Sigmoid colon (tissue), 7 donors: ENCODE measurements at regions of chr3 and their contacts with region 1.

Region 1: GRCh38 chr3:12982619-12983101 is 90.6 kb downstream of the IQSEC1 start:
- DNase-seq: no peak
- H3K4me3 ChIP-seq: no peak overlapping the region
- H3K27ac ChIP-seq: no peak overlapping the region
- H3K4me1 ChIP-seq: peaks cover 0 to 5% (median 0%) of the 10 kb centered on the region in 4 donors
- H3K27me3 ChIP-seq: no peaks in the 10 kb centered on the region
- CTCF ChIP-seq: no peak
- EP300 ChIP-seq: no peak
- POLR2A ChIP-seq: no peak

Region 2: GRCh38 chr3:12967606-12968351 is 14.9 kb before region 1 on chr3:
- intact Hi-C with region 1: loop called (anchors 2 kb)
- DNase-seq: peak; percentile 96
- H3K4me3 ChIP-seq: peak overlapping the region; percentile 73 to 97 (median 85)
- H3K27ac ChIP-seq: peak overlapping the region; percentile 82 to 84 (median 82)
- H3K4me1 ChIP-seq: peaks cover 0 to 59% (median 48%) of the 10 kb centered on the region in 4 donors
- H3K27me3 ChIP-seq: no peaks in the 10 kb centered on the region
- CTCF ChIP-seq: no peak
- EP300 ChIP-seq: no peak
- POLR2A ChIP-seq: peak in 1 of 2 donors; percentile 10